Activated CD4-positive, alpha-beta memory T cell treated with anti-CD3 and anti-CD28 coated beads, Interleukin-2, amount 10 ng/mL, durations not matched to agents 7 days and 5 days (primary cell): ENCODE measurements at regions of chr3 and their contacts with region 1.

Region 1: GRCh38 chr3:128680602-128681368 is 30.2 kb upstream of the RPN1 start:
- DNase-seq: peak; percentile 97
- H3K4me3 Mint-ChIP-seq: peak overlapping the region; percentile 86
- H3K27ac Mint-ChIP-seq: peak overlapping the region; percentile 86
- H3K4me1 Mint-ChIP-seq: peaks cover 38% of the 10 kb centered on the region
- H3K27me3 Mint-ChIP-seq: peaks cover 6% of the 10 kb centered on the region

Region 2: DNA sequence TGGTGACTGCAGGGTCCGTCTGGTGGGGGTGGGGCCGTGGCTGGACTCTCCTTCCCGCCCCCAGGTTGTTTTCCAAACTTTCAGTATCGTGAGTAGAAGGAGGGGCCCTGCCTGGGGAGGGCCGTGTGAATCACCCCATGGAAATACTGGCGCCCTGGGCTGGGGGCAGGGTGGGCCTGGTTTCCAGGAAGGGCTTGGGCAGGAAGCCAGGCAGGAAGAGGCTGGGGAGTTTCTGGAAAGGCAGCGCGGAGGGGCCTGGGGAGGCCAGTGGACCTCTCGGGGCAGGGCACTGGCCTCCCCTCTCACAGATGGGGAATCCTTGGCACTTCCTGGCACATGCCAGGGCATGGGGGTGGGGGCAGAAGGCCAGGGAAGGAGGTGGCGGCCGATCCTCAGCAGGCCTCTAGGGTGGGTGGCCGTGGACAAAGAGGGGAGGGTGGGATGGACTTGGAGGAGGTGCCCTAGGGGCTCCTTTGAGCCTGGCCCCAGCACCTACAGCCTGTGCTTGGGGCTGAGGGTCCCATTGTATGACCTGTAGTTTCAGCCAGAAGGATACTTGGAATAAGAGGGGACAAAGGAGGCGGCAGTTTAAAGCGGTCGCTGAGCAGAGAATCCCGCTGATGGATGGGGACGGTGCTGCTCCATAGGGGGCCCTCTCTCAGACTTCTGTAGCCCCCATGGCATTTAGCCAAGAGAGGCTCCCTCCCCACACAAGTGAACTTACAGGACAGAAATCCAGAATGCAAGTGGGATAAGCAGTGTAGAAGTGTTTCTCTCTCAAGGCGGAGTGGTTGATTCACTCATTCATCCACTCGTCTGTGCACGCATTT is 131.3 kb before region 1 on chr3:
- CTCF ChIA-PET with region 1: no interaction called
- POLR2A ChIA-PET with region 1: no interaction called
- DNase-seq: no peak
- H3K4me3 Mint-ChIP-seq: no peak overlapping the region
- H3K27ac Mint-ChIP-seq: no peak overlapping the region
- H3K4me1 Mint-ChIP-seq: peaks cover 2% of the 10 kb centered on the region
- H3K27me3 Mint-ChIP-seq: peaks cover 40% of the 10 kb centered on the region

Region 3: DNA sequence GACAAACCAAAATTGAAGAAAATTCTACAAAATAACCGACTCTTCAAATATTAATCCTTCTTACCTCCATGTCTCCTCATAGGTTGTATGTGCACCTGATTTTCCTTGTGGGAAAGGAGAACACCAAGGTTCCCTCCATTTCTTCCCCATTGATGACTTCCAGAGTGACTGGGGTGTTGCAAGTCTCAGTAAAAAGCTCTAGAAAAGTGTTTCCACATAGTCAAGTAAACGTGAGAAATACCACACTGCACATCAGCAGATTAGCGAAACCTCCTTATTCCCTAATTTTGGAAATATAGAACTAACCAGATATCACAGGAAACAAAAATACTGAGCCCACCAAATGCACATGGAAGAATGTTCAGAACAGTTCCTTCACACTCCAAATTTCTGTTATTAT is 25.3 kb before region 1 on chr3:
- CTCF ChIA-PET with region 1: interaction called, 21 read pairs
- POLR2A ChIA-PET with region 1: interaction called, 26 read pairs
- DNase-seq: no peak
- H3K4me3 Mint-ChIP-seq: no peak overlapping the region
- H3K27ac Mint-ChIP-seq: no peak overlapping the region
- H3K4me1 Mint-ChIP-seq: peaks cover 15% of the 10 kb centered on the region
- H3K27me3 Mint-ChIP-seq: peaks cover 3% of the 10 kb centered on the region

Region 4: DNA sequence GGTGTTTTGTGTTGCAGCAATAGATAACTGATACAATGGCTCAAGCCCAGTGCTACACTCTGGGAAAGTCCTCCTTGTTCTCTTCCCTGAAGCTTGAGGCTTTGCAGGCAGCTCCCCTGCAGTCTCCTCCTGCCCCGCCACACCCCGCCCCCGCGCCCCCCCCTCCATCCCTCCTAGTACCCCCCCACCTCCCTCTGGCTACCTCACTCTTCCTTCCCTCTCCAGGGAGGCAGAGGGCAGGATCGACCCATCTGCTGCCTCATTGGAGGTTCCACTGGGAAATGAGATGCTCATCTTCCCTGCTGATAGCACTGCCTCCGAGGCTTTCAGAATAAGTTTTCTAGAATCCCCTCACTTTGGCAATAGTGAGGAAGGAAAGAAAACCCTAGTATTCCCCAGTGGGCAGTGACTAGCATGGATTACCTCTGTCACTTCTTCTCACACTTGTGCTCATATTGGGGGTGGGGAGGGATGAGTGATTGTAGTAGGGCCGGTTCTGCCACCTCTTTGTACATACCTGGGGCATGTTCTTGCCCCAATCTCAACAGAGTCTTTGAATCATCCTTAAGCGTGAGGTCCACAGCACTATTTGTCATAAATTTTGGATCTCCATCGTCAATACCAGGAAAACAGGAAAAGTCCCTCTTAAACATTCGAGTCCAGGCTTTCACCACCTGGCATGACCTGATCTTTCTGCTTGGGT is 28.9 kb after region 1 on chr3:
- CTCF ChIA-PET with region 1: interaction called, 20 read pairs
- POLR2A ChIA-PET with region 1: interaction called, 9 read pairs
- DNase-seq: no peak
- H3K4me3 Mint-ChIP-seq: no peak overlapping the region
- H3K27ac Mint-ChIP-seq: no peak overlapping the region
- H3K4me1 Mint-ChIP-seq: peaks cover 10% of the 10 kb centered on the region
- H3K27me3 Mint-ChIP-seq: peaks cover 2% of the 10 kb centered on the region

Region 5: GRCh38 chr3:128787256-128788240 is 106.8 kb after region 1 on chr3:
- CTCF ChIA-PET with region 1: interaction called, 187 read pairs
- POLR2A ChIA-PET with region 1: interaction called, 33 read pairs
- DNase-seq: peak; percentile 44
- H3K4me3 Mint-ChIP-seq: peak overlapping the region; percentile 60
- H3K27ac Mint-ChIP-seq: peak overlapping the region; percentile 87
- H3K4me1 Mint-ChIP-seq: peaks cover 74% of the 10 kb centered on the region
- H3K27me3 Mint-ChIP-seq: no peaks in the 10 kb centered on the region

Region 6: GRCh38 chr3:128845778-128846485 is 165.1 kb after region 1 on chr3:
- CTCF ChIA-PET with region 1: interaction called, 35 read pairs
- POLR2A ChIA-PET with region 1: interaction called, 18 read pairs
- DNase-seq: peak; percentile 87
- H3K4me3 Mint-ChIP-seq: peak overlapping the region; percentile 55
- H3K27ac Mint-ChIP-seq: peak overlapping the region; percentile 53
- H3K4me1 Mint-ChIP-seq: peaks cover 16% of the 10 kb centered on the region
- H3K27me3 Mint-ChIP-seq: peaks cover 2% of the 10 kb centered on the region